Gastrocnemius medialis (tissue), 4 donors: ENCODE measurements at regions of chr2 and their contacts with region 1.

Region 1: GRCh38 chr2:231925303-231926179 is 655 bp downstream of the NPPC start:
- DNase-seq: peak; percentile 56 to 66
- ATAC-seq: peak; percentile 93 to 95
- H3K4me3 ChIP-seq: peak overlapping the region; percentile 48 to 66 (median 50)
- H3K27ac ChIP-seq: no peak overlapping the region
- H3K4me1 ChIP-seq: peaks cover 8 to 21% of the 10 kb centered on the region in 2 donors
- H3K27me3 ChIP-seq: peaks cover 29 to 65% (median 57%) of the 10 kb centered on the region in 3 donors
- CTCF ChIP-seq: peak; percentile 76 to 95 (median 92)
- POLR2A ChIP-seq: no peak

Region 2: GRCh38 chr2:231877533-231878456 is 47.7 kb before region 1 on chr2:
- in situ Hi-C with region 1: no loop called
- intact Hi-C with region 1: no loop called
- DNase-seq: no peak
- ATAC-seq: no peak
- H3K4me3 ChIP-seq: no peak overlapping the region
- H3K27ac ChIP-seq: no peak overlapping the region
- H3K4me1 ChIP-seq: no peaks in the 10 kb centered on the region
- H3K27me3 ChIP-seq: peaks cover 0 to 5% (median 0%) of the 10 kb centered on the region in 3 donors
- CTCF ChIP-seq: no peak
- POLR2A ChIP-seq: no peak

Region 3: GRCh38 chr2:232133078-232133477 is 207.5 kb after region 1 on chr2:
- in situ Hi-C with region 1: loop called in 1 of 4 experiments (anchors 10 kb)
- intact Hi-C with region 1: loop called (anchors 2 kb)
- DNase-seq: no peak
- ATAC-seq: no peak
- H3K4me3 ChIP-seq: no peak overlapping the region
- H3K27ac ChIP-seq: no peak overlapping the region
- H3K4me1 ChIP-seq: no peaks in the 10 kb centered on the region
- H3K27me3 ChIP-seq: no peaks in the 10 kb centered on the region
- CTCF ChIP-seq: no peak
- POLR2A ChIP-seq: no peak

Region 4: DNA sequence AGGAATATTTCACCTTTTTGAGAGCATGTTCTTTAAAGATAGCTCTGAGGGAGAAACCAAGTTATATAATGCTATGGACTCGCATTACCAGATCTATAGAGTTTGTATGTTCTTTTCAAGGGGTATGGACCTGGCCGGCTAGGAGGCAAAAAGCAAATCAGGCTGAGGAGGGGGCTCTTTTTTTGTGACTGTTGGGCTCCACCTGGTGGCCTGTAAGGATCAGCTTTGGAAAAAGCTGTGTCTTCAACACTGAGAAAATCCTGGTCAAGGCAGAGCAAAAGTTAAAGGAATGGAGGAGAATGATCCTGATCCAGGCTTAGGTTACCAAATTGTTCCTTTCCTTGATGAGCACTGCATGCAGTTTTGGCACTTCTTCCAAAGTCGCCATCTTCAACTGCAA is 216.5 kb after region 1 on chr2:
- in situ Hi-C with region 1: loop called (anchors 5 to 10 kb)
- intact Hi-C with region 1: loop called (anchors 1 kb)
- DNase-seq: no peak
- ATAC-seq: no peak
- H3K4me3 ChIP-seq: no peak overlapping the region
- H3K27ac ChIP-seq: no peak overlapping the region
- H3K4me1 ChIP-seq: no peaks in the 10 kb centered on the region
- H3K27me3 ChIP-seq: no peaks in the 10 kb centered on the region
- CTCF ChIP-seq: peak; percentile 39 to 61 (median 56)
- POLR2A ChIP-seq: no peak

Region 5: DNA sequence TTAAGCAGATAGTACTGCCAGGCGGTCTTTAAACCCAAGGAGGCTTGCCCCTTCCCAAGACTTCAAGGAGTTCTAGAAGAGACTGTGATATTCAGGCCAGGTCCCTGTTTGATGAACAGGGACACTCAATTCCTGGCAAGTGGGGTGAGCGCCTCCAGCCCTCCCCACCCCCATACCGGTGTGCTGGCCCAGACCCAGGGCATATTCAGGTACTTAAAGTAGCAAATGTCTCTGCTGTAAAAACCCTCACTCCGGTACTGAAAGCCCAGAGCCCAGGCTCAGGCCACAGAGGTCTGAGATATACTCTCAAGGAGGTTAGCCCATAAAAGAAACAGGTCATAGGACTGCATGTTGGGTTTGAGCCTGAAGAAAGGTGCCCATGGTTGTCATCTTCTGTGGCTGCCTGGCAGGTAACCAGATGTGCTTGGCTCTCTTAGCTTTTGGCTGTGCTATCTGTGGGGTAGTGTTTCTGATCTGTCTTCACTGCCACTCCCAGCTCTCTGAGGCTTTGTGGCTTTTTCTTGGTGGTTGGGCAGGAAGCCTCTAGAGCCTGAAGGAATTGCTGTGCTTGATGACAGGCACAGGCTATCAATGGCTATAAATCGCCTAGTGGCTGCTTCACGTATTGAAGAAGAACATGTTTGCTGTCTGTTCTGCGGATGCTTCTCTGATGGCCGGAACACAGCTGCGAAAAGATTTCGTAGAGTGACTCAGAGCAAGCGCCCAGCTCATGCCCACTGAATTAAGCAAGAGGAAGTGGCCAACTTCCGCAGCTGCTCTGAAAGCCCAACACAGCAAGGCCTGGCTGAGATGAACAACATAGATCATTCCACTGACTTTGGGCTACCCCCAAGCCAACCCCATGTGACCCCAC is 389.7 kb after region 1 on chr2:
- in situ Hi-C with region 1: loop called in 3 of 4 experiments (anchors 10 to 25 kb)
- intact Hi-C with region 1: no loop called
- DNase-seq: peak; percentile 78 to 85
- ATAC-seq: peak; percentile 96 to 97
- H3K4me3 ChIP-seq: no peak overlapping the region
- H3K27ac ChIP-seq: peak overlapping the region; percentile 74 to 81 (median 79)
- H3K4me1 ChIP-seq: peaks cover 19 to 33% of the 10 kb centered on the region in 2 donors
- H3K27me3 ChIP-seq: no peaks in the 10 kb centered on the region
- CTCF ChIP-seq: peak; percentile 27 to 63 (median 43)
- POLR2A ChIP-seq: no peak